ENCODE measurements at regions of chr20 and their contacts with region 1.

Region 1: DNA sequence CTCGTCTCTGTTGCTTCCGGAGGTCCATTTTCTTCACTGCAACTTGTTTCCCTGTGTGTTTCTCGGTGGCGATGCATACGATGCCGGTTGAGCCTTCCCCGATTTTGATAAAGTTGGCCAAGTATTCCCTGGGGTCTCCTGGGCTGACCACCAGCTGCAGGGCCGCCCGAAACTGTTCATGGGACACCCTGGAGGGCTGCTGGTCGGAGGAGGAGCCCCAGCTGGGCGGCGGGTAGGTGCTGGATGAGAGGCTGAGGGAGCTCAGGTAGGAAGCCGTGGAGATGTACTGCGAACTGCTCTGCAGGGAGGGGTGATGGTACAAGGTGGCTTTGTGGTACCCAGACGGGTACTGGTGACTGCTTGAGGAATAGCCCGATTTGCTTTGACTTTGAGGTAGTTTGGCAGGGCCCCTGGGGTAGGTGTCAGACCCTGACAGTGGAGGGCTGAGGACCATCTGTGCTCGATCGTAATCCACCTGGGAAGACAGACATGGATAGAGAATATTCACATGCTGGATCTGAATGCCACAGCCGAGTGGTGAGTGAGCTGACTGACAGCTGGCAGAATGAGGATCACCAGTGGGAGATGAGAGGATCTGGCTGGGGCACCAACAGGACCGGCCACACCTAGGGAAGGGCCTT is 51.6 kb downstream of the LAMP5 start:
- DNase-seq: no peak
- H3K4me3 ChIP-seq: no peak overlapping the region
- H3K27ac ChIP-seq: no peak overlapping the region
- H3K4me1 ChIP-seq: no peaks in the 10 kb centered on the region
- H3K27me3 ChIP-seq: no peaks in the 10 kb centered on the region; the same call in none of the 2 replicates

Region 2: GRCh38 chr20:9068851-9069663 is 497.0 kb before region 1 on chr20 and contains the start of gene PLCB4:
- in situ Hi-C with region 1: no loop called
- DNase-seq: peak; percentile 61
- H3K4me3 ChIP-seq: peak within 1 kb of the TSS; percentile 83
- H3K27ac ChIP-seq: no peak within 1 kb of the TSS
- H3K4me1 ChIP-seq: peaks cover 6% of the 10 kb centered on the region; the same call in 1 of the 2 replicates
- H3K27me3 ChIP-seq: no peaks in the 10 kb centered on the region
- total RNA-seq, gene PLCB4: 9.5 and 10.5 TPM in 2 replicates

Region 3: GRCh38 chr20:9647741-9648140 is 81.7 kb after region 1 on chr20:
- in situ Hi-C with region 1: loop called (anchors 10 kb)
- DNase-seq: no peak
- H3K4me3 ChIP-seq: no peak overlapping the region
- H3K27ac ChIP-seq: no peak overlapping the region
- H3K4me1 ChIP-seq: no peaks in the 10 kb centered on the region
- H3K27me3 ChIP-seq: no peaks in the 10 kb centered on the region

Region 4: GRCh38 chr20:9800421-9800820 is 234.4 kb after region 1 on chr20:
- in situ Hi-C with region 1: no loop called
- DNase-seq: no peak
- H3K4me3 ChIP-seq: no peak overlapping the region
- H3K27ac ChIP-seq: no peak overlapping the region
- H3K4me1 ChIP-seq: no peaks in the 10 kb centered on the region
- H3K27me3 ChIP-seq: no peaks in the 10 kb centered on the region

Measured in GM23248 (cell line).